Right ventricle myocardium superior (tissue), 1 donor: ENCODE measurements at regions of chr1 and their contacts with region 1.

Region 1: GRCh38 chr1:85307987-85308832 is 31.8 kb upstream of the BCL10 start:
- DNase-seq: peak; percentile 92
- ATAC-seq: peak; percentile 99

Region 2: GRCh38 chr1:85172684-85173337 is 135.4 kb before region 1 on chr1:
- intact Hi-C with region 1: no loop called
- DNase-seq: no peak
- ATAC-seq: no peak

Region 3: DNA sequence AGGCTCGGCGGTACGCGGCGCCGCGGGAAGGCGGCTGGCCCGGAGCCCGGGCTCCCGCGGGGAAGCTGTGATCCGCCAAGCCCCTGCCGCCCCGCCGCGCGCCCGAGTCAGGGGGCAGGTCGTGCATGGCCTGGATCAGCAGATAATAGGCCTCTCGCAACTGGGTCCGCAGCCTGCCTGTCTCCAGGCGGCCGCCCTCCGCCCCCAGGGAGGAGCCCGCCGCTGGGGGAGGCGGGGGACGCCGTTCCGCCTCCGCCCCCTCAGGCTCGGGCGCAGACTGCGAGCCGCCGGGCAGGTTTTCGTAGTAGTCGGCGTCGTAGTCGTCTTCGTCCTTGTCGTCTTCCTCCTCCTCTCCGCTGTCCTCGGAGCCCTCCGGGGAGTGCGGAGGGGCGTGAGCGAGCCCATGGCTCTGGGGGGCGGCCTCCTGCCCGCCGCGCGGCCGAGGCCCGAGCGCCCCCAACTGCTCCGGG is 107.3 kb before region 1 on chr1 and contains the start of gene SYDE2:
- intact Hi-C with region 1: no loop called
- DNase-seq: peak; percentile 82
- ATAC-seq: peak; percentile 92
- total RNA-seq, gene SYDE2: 21.4 TPM

Region 4: DNA sequence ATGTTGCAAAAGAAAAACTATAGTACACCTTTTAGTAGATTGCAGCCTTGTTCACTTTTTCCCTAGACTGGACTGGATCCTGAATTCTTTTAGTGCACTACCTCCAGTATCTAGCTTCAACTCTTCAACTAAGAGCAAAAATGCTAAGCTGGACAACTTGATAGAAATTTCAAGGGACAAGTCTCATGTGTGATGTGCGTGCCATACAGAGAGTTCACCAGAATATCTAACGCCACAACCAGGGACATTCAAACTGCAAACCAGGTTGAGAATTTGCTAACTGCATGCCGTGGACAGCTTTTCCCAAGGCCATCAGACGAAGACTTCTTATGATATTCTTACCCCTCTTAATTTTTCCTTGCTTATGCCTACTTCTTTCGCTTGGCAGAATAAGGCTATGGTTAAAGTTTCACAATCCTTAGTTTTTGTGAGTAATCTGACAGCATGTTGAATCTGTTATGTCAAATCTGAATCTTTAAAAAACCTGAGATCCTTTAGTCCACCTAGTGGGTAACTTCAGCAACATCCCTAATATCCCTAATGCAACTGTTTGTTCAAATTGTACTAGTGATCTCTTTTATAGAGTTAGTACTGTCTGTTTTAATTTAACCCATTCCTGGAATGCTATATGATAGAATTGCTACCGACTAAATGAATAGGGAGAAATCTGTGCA is 90.3 kb after region 1 on chr1:
- intact Hi-C with region 1: loop called (anchors 5 kb)
- DNase-seq: no peak
- ATAC-seq: peak; percentile 66

Region 5: GRCh38 chr1:85448358-85448757 is 140.1 kb after region 1 on chr1:
- intact Hi-C with region 1: no loop called
- DNase-seq: no peak
- ATAC-seq: peak; percentile 59

Region 6: GRCh38 chr1:85502625-85503083 is 194.4 kb after region 1 on chr1:
- intact Hi-C with region 1: loop called (anchors 2 kb)
- DNase-seq: no peak
- ATAC-seq: peak; percentile 95

Region 7: DNA sequence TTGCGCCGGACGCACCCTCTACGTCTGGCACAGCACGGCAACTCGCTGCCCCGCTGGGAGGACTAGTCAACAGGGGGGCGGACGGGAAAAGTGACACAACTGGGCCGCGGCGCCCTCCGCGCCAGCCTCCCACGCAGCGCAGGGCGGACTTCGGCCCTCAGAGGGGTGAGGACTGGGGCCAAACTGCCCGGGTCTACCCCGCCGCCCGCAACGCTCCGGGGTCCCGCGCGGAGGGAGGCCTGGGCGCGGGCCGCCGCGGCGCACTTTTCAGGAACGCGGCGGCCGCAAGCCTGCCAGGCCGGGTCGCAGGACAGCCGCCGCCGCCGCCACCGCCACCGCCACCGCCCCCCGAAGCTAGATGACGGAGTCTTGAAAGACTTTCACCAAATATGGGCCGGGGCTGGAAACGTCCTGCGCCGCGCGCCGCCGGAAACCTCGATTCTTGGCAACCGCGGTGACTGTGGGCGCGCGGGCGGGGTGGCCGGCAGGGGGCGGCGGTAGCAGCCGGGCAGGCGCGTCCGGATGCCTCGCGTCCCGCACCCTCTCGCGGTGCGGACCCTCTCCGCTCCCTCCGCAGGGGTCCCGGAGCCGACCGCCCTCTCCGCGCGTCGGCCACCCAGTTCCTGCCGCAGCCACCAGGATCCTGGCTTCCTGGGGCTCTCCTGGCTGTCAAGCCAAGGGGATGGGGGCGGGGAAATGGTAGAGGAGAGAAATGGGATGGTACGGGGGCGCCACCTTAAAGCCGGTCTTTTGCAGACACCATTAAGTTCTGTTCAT is 268.6 kb after region 1 on chr1:
- intact Hi-C with region 1: loop called (anchors 5 kb)
- DNase-seq: peak; percentile 91
- ATAC-seq: peak; percentile 73

Region 8: GRCh38 chr1:85692730-85693314 is 384.6 kb after region 1 on chr1:
- intact Hi-C with region 1: loop called (anchors 5 kb)
- DNase-seq: no peak
- ATAC-seq: peak; percentile 64